Naive thymus-derived CD4-positive, alpha-beta T cell (primary cell): ENCODE measurements at regions of chr2 and their contacts with region 1.

Region 1: GRCh38 chr2:98702127-98702802 is 28.7 kb downstream of the MGAT4A start:
- DNase-seq: no peak
- ATAC-seq: peak; percentile 26
- H3K4me3 ChIP-seq: no peak overlapping the region
- H3K4me3 Mint-ChIP-seq: peak overlapping the region in 9 of 10 donors; percentile 46 to 77 (median 62)
- H3K27ac ChIP-seq: peak overlapping the region; percentile 62
- H3K27ac Mint-ChIP-seq: peak overlapping the region; percentile 48 to 93 (median 75)
- H3K4me1 ChIP-seq: peaks cover 18 to 56% of the 10 kb centered on the region in 2 donors
- H3K4me1 Mint-ChIP-seq: peaks cover 47 to 92% (median 84%) of the 10 kb centered on the region in 7 donors
- H3K27me3 ChIP-seq: no peaks in the 10 kb centered on the region
- H3K27me3 Mint-ChIP-seq: no peaks in the 10 kb centered on the region

Region 2: DNA sequence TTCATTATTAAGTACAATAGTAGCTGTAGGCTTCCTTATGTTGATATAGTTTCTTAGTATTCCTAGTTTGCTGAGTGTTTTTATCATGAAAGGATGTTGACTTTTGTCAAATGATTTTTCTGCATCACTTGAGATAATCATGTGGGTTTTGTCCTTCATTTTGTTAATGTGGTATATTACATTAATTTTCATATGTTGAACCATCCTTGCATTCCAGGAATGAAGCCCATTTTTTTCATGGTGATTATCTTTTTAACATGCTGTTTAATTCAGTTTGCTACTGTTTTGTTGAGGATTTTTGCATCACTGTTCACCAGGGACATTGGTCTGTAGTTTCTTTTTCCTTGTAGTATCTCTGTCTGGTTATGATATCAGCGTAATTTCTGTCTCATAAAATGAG is 438.9 kb before region 1 on chr2:
- CTCF ChIA-PET with region 1: no interaction called
- POLR2A ChIA-PET with region 1: no interaction called
- intact Hi-C with region 1: no loop called
- DNase-seq: no peak
- ATAC-seq: no peak
- H3K4me3 ChIP-seq: no peak overlapping the region
- H3K4me3 Mint-ChIP-seq: no peak overlapping the region
- H3K27ac ChIP-seq: no peak overlapping the region
- H3K27ac Mint-ChIP-seq: no peak overlapping the region
- H3K4me1 ChIP-seq: no peaks in the 10 kb centered on the region
- H3K4me1 Mint-ChIP-seq: no peaks in the 10 kb centered on the region
- H3K27me3 ChIP-seq: no peaks in the 10 kb centered on the region
- H3K27me3 Mint-ChIP-seq: peaks cover 15 to 45% (median 29%) of the 10 kb centered on the region in 5 donors

Region 3: DNA sequence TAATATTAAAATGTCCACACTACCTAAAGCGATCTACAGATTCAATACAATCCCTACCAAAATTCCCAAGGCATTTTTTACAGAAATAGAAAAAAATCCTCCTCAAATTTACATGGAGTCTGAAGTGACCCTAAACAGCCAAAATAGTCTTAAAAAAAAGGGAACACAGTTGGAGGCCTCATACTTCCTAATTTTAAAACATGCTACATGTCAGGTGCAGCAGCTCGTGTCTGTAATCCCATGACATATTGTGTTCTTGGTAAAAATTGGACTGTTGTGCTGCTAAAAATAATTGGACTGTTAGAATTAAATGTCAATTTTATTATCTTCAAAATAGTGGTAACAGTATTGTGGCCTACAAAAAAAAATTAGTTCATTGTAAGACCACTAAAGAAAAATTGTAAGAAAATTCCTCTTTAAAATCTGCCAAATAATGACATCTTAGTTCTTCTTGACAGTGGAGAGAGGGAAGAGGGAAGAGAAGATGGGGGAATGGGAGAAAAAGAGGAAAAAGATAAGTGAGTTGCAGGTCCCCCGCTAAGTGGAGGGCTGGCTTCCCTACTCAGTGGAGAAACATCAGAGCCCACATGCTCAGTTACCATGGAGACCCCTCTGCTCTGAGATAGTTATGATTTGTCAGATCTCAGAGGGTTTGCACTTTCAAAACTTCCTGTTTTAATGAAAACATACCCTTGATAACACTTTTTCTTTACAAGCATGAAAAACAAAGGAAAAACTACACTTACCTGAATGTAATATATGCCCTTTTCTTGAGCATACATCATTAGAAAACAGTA is 47.4 kb before region 1 on chr2:
- CTCF ChIA-PET with region 1: interaction called, 5 read pairs
- POLR2A ChIA-PET with region 1: interaction called, 4 read pairs
- intact Hi-C with region 1: loop called in 1 of 2 experiments (anchors 2 kb)
- DNase-seq: peak in 7 of 9 donors; percentile 52 to 80 (median 75)
- ATAC-seq: peak; percentile 72
- H3K4me3 ChIP-seq: peak overlapping the region; percentile 4
- H3K4me3 Mint-ChIP-seq: peak overlapping the region; percentile 40 to 81 (median 69)
- H3K27ac ChIP-seq: peak overlapping the region; percentile 79
- H3K27ac Mint-ChIP-seq: peak overlapping the region; percentile 76 to 99 (median 93)
- H3K4me1 ChIP-seq: peaks cover 64 to 85% of the 10 kb centered on the region in 2 donors
- H3K4me1 Mint-ChIP-seq: peaks cover 50 to 97% (median 88%) of the 10 kb centered on the region in 7 donors
- H3K27me3 ChIP-seq: no peaks in the 10 kb centered on the region
- H3K27me3 Mint-ChIP-seq: no peaks in the 10 kb centered on the region

Region 4: GRCh38 chr2:98691303-98691702 is 11.0 kb before region 1 on chr2:
- CTCF ChIA-PET with region 1: interaction called, 3 read pairs
- POLR2A ChIA-PET with region 1: interaction called, 7 read pairs
- intact Hi-C with region 1: loop called in 1 of 2 experiments (anchors 1 kb)
- DNase-seq: peak in 1 of 9 donors; percentile 14
- ATAC-seq: peak; percentile 52
- H3K4me3 ChIP-seq: no peak overlapping the region
- H3K4me3 Mint-ChIP-seq: peak overlapping the region in 8 of 10 donors; percentile 29 to 71 (median 54)
- H3K27ac ChIP-seq: peak overlapping the region; percentile 7
- H3K27ac Mint-ChIP-seq: peak overlapping the region; percentile 32 to 94 (median 79)
- H3K4me1 ChIP-seq: peaks cover 60 to 61% of the 10 kb centered on the region in 2 donors
- H3K4me1 Mint-ChIP-seq: peaks cover 56 to 97% (median 91%) of the 10 kb centered on the region in 7 donors
- H3K27me3 ChIP-seq: no peaks in the 10 kb centered on the region
- H3K27me3 Mint-ChIP-seq: no peaks in the 10 kb centered on the region